Naive thymus-derived CD4-positive, alpha-beta T cell (primary cell): ENCODE measurements at regions of chr10 and their contacts with region 1.

Region 1: GRCh38 chr10:470338-470999 is 219.0 kb downstream of the DIP2C start:
- DNase-seq: peak in 7 of 9 donors; percentile 64 to 84 (median 78)
- ATAC-seq: peak; percentile 83
- H3K4me3 ChIP-seq: peak overlapping the region; percentile 30
- H3K4me3 Mint-ChIP-seq: peak overlapping the region; percentile 39 to 87 (median 72)
- H3K27ac ChIP-seq: peak overlapping the region; percentile 43
- H3K27ac Mint-ChIP-seq: peak overlapping the region; percentile 21 to 94 (median 93)
- H3K4me1 ChIP-seq: peaks cover 17 to 29% of the 10 kb centered on the region in 2 donors
- H3K4me1 Mint-ChIP-seq: peaks cover 13 to 39% (median 31%) of the 10 kb centered on the region in 7 donors
- H3K27me3 ChIP-seq: no peaks in the 10 kb centered on the region
- H3K27me3 Mint-ChIP-seq: no peaks in the 10 kb centered on the region

Region 2: DNA sequence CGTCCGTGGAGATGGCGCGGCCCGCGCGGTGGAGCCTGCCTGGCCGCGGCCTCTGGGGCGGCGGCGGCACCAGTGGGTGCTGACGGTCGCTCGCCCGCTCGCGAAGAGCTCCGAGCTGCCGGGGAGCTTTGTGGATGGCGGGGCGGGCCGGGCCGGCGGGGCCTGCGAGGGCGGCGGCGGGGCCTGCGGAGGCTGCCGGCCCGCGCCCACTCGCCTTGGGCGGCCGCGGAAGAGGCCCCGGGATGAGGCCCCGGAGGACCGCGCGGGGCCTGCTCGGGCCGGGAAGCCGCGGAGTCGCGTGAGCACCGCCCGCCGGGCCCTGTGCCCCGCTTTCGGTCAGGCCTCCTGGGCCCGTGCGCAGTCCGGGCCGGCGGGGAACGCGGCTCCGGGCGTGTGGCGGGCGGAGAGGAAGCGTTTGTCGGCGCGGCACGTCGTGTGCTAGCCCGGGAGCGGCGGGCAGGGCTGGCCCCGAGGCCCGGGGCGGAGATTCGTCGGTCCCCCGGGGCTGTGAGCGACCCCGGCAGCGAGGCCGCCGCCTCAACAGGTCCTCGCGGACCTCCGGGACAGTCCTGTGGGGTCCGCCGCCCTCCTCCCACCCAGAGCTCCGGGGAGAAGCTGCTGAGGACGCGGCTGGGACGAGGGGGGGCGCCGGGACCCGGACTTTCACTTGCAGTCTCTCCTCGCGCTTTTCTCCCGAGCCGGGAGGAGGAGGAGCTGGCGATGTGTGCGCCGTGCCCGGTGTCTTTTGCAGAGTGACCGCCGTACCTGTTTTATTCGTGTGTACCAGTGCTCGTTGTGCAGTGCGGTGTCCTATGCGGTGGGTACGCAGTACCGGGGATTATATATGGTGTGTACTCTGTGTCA is 334.6 kb before region 1 on chr10:
- CTCF ChIA-PET with region 1: no interaction called
- POLR2A ChIA-PET with region 1: no interaction called
- intact Hi-C with region 1: loop called in 1 of 2 experiments (anchors 5 kb)
- DNase-seq: peak; percentile 54 to 77 (median 68)
- ATAC-seq: peak; percentile 67
- H3K4me3 ChIP-seq: peak overlapping the region; percentile 67
- H3K4me3 Mint-ChIP-seq: peak overlapping the region; percentile 86 to 96 (median 94)
- H3K27ac ChIP-seq: peak overlapping the region; percentile 90
- H3K27ac Mint-ChIP-seq: peak overlapping the region; percentile 82 to 96 (median 93)
- H3K4me1 ChIP-seq: peaks cover 16 to 17% of the 10 kb centered on the region in 2 donors
- H3K4me1 Mint-ChIP-seq: peaks cover 27 to 59% (median 49%) of the 10 kb centered on the region in 7 donors
- H3K27me3 ChIP-seq: no peaks in the 10 kb centered on the region
- H3K27me3 Mint-ChIP-seq: peaks cover 0 to 15% (median 0%) of the 10 kb centered on the region in 5 donors

Region 3: GRCh38 chr10:251982-252582 is 218.4 kb before region 1 on chr10:
- CTCF ChIA-PET with region 1: no interaction called
- POLR2A ChIA-PET with region 1: no interaction called
- intact Hi-C with region 1: loop called in 1 of 2 experiments (anchors 2 kb)
- DNase-seq: no peak
- ATAC-seq: no peak
- H3K4me3 ChIP-seq: no peak overlapping the region
- H3K4me3 Mint-ChIP-seq: no peak overlapping the region
- H3K27ac ChIP-seq: no peak overlapping the region
- H3K27ac Mint-ChIP-seq: peak overlapping the region in 1 of 9 donors; percentile 46
- H3K4me1 ChIP-seq: no peaks in the 10 kb centered on the region
- H3K4me1 Mint-ChIP-seq: no peaks in the 10 kb centered on the region
- H3K27me3 ChIP-seq: no peaks in the 10 kb centered on the region
- H3K27me3 Mint-ChIP-seq: no peaks in the 10 kb centered on the region

Region 4: GRCh38 chr10:351770-352334 is 118.6 kb before region 1 on chr10:
- CTCF ChIA-PET with region 1: no interaction called
- POLR2A ChIA-PET with region 1: interaction called, 3 read pairs
- intact Hi-C with region 1: loop called in 1 of 2 experiments (anchors 1 kb)
- DNase-seq: peak in 7 of 9 donors; percentile 31 to 68 (median 53)
- ATAC-seq: peak; percentile 81
- H3K4me3 ChIP-seq: no peak overlapping the region
- H3K4me3 Mint-ChIP-seq: peak overlapping the region in 8 of 10 donors; percentile 19 to 60 (median 46)
- H3K27ac ChIP-seq: no peak overlapping the region
- H3K27ac Mint-ChIP-seq: peak overlapping the region in 8 of 9 donors; percentile 50 to 87 (median 70)
- H3K4me1 ChIP-seq: peaks cover 6 to 15% of the 10 kb centered on the region in 2 donors
- H3K4me1 Mint-ChIP-seq: peaks cover 0 to 25% (median 21%) of the 10 kb centered on the region in 7 donors
- H3K27me3 ChIP-seq: no peaks in the 10 kb centered on the region
- H3K27me3 Mint-ChIP-seq: no peaks in the 10 kb centered on the region

Region 5: DNA sequence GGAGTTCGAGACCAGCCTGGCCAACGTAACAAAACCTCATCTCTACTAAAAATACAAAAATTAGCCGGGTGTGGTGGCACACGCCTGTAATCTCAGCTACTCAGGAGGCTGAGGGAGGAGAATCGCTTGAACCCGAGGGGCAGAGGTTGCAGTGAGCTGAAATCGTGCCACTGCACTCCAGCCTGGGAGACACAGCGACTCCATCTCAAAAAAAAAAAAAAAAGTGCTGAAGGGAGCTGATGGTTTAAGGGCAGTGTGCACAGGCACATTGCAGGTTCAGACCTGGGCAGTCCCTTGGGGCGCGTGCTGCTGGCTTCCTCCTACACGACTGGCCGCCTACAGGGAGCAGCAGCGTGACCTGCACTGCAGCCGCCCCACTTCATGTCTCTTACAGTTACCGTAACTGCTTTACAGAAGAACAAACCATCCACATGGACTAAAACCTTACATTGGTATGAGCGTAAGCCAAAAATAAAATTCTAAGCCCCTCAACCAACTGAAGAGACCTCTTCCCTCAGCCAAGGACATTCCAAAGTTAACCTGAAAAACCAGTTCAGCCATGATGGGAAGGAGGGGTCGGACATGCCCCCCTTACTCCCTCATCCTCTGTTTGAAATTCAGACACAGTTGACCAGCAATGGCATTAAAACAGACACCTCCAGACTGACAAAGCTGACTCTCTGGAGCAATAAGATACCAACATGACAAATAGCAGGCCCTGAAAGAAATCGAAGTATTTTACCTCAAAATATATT is 73.0 kb before region 1 on chr10:
- CTCF ChIA-PET with region 1: no interaction called
- POLR2A ChIA-PET with region 1: no interaction called
- intact Hi-C with region 1: loop called in 1 of 2 experiments (anchors 5 kb)
- DNase-seq: no peak
- ATAC-seq: no peak
- H3K4me3 ChIP-seq: no peak overlapping the region
- H3K4me3 Mint-ChIP-seq: no peak overlapping the region
- H3K27ac ChIP-seq: no peak overlapping the region
- H3K27ac Mint-ChIP-seq: no peak overlapping the region
- H3K4me1 ChIP-seq: no peaks in the 10 kb centered on the region
- H3K4me1 Mint-ChIP-seq: peaks cover 0 to 6% (median 0%) of the 10 kb centered on the region in 7 donors
- H3K27me3 ChIP-seq: no peaks in the 10 kb centered on the region
- H3K27me3 Mint-ChIP-seq: no peaks in the 10 kb centered on the region

Region 6: DNA sequence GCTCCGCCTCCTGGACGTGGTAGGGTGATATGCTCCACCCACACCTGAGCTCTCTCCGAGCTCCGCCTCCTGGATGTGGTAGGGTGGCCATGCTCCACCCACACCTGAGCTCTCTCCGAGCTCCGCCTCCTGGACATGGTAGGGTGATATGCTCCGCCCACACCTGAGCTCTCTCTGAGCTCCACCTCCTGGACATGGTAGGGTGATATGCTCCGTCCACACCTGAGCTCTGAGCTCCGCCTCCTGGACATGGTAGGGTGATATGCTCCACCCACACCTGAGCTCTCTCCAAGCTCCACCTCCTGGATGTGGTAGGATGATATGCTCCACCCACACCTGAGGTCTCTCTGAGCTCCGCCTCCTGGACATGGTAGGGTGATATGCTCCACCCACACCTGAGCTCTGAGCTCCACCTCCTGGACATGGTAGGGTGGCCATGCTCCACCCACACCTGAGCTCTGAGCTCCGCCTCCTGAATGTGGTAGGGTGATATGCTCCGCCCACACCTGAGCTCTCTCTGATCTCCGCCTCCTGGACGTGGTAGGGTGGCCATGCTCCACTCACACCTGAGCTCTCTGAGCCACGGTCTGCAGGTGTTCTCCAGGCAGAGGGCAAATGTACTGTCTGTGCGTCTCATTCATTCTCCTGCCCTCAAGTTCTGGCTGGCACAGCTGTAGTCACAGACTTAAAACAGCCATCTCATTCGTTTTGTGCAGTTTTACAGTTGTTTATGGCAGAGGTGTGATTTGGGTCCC is 33.4 kb before region 1 on chr10:
- CTCF ChIA-PET with region 1: no interaction called
- POLR2A ChIA-PET with region 1: interaction called, 4 read pairs
- intact Hi-C with region 1: loop called in 1 of 2 experiments (anchors 1 kb)
- DNase-seq: no peak
- ATAC-seq: no peak
- H3K4me3 ChIP-seq: peak overlapping the region; percentile 1
- H3K4me3 Mint-ChIP-seq: peak overlapping the region; percentile 2 to 60 (median 40)
- H3K27ac ChIP-seq: no peak overlapping the region
- H3K27ac Mint-ChIP-seq: peak overlapping the region in 3 of 9 donors; percentile 17 to 70 (median 24)
- H3K4me1 ChIP-seq: peaks cover 19 to 25% of the 10 kb centered on the region in 2 donors
- H3K4me1 Mint-ChIP-seq: peaks cover 21 to 64% (median 47%) of the 10 kb centered on the region in 7 donors
- H3K27me3 ChIP-seq: peaks cover 0 to 4% of the 10 kb centered on the region in 2 donors
- H3K27me3 Mint-ChIP-seq: peaks cover 0 to 14% (median 0%) of the 10 kb centered on the region in 5 donors

Region 7: DNA sequence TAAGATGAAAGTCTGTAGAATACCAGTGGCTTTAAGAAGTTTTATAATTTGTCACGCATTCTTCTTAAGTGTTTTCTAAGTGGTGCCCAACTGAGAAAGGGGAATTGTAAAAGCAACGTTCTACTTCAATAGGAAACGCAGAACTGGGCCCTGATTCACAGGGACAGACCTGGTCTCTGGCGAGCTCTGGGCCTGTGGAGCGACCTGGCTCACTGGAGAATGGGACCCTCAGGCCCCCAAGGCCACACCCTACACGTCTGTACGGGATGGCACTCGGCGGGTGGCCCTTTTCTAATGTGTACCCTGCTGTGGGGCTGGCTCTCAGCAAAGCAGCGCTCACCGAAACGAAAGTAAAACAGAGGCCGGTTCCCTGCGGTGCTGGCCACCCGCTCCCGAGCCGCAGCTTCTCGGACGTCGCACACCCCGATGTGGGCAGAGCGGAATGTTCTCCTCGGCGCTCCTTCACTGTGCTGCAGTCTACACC is 14.0 kb after region 1 on chr10:
- CTCF ChIA-PET with region 1: no interaction called
- POLR2A ChIA-PET with region 1: interaction called, 20 read pairs
- intact Hi-C with region 1: no loop called
- DNase-seq: peak in 5 of 9 donors; percentile 5 to 35 (median 22)
- ATAC-seq: peak; percentile 59
- H3K4me3 ChIP-seq: peak overlapping the region; percentile 64
- H3K4me3 Mint-ChIP-seq: peak overlapping the region; percentile 73 to 95 (median 86)
- H3K27ac ChIP-seq: peak overlapping the region; percentile 76
- H3K27ac Mint-ChIP-seq: peak overlapping the region; percentile 88 to 99 (median 94)
- H3K4me1 ChIP-seq: no peaks in the 10 kb centered on the region
- H3K4me1 Mint-ChIP-seq: peaks cover 5 to 25% (median 13%) of the 10 kb centered on the region in 7 donors
- H3K27me3 ChIP-seq: no peaks in the 10 kb centered on the region
- H3K27me3 Mint-ChIP-seq: no peaks in the 10 kb centered on the region